Lower lobe of right lung (tissue), 2 donors: ENCODE measurements at regions of chr10 and their contacts with region 1.

Region 1: GRCh38 chr10:98467506-98468346 is 21.0 kb upstream of the HPS1 start:
- DNase-seq: peak; percentile 77
- ATAC-seq: peak; percentile 97 to 98
- H3K4me3 ChIP-seq: peak overlapping the region; percentile 60
- H3K27ac ChIP-seq: no peak overlapping the region
- H3K4me1 ChIP-seq: peaks cover 5% of the 10 kb centered on the region
- H3K27me3 ChIP-seq: no peaks in the 10 kb centered on the region
- CTCF ChIP-seq: peak; percentile 87

Region 2: GRCh38 chr10:98170249-98171117 is 297.2 kb before region 1 on chr10:
- intact Hi-C with region 1: no loop called
- DNase-seq: no peak
- ATAC-seq: peak; percentile 78 to 81
- H3K4me3 ChIP-seq: no peak overlapping the region
- H3K27ac ChIP-seq: no peak overlapping the region
- H3K4me1 ChIP-seq: no peaks in the 10 kb centered on the region
- H3K27me3 ChIP-seq: no peaks in the 10 kb centered on the region
- CTCF ChIP-seq: peak; percentile 79

Region 3: GRCh38 chr10:98587156-98587837 is 119.6 kb after region 1 on chr10:
- intact Hi-C with region 1: no loop called
- DNase-seq: no peak
- ATAC-seq: no peak
- H3K4me3 ChIP-seq: no peak overlapping the region
- H3K27ac ChIP-seq: no peak overlapping the region
- H3K4me1 ChIP-seq: no peaks in the 10 kb centered on the region
- H3K27me3 ChIP-seq: no peaks in the 10 kb centered on the region
- CTCF ChIP-seq: no peak

Region 4: GRCh38 chr10:99248824-99249223 is 781.1 kb after region 1 on chr10:
- intact Hi-C with region 1: loop called (anchors 10 kb)
- DNase-seq: no peak
- ATAC-seq: no peak
- H3K4me3 ChIP-seq: no peak overlapping the region
- H3K27ac ChIP-seq: no peak overlapping the region
- H3K4me1 ChIP-seq: no peaks in the 10 kb centered on the region
- H3K27me3 ChIP-seq: no peaks in the 10 kb centered on the region
- CTCF ChIP-seq: no peak